Heart left ventricle (tissue), 16 donors: ENCODE measurements at regions of chr1 and their contacts with region 1.

Region 1: DNA sequence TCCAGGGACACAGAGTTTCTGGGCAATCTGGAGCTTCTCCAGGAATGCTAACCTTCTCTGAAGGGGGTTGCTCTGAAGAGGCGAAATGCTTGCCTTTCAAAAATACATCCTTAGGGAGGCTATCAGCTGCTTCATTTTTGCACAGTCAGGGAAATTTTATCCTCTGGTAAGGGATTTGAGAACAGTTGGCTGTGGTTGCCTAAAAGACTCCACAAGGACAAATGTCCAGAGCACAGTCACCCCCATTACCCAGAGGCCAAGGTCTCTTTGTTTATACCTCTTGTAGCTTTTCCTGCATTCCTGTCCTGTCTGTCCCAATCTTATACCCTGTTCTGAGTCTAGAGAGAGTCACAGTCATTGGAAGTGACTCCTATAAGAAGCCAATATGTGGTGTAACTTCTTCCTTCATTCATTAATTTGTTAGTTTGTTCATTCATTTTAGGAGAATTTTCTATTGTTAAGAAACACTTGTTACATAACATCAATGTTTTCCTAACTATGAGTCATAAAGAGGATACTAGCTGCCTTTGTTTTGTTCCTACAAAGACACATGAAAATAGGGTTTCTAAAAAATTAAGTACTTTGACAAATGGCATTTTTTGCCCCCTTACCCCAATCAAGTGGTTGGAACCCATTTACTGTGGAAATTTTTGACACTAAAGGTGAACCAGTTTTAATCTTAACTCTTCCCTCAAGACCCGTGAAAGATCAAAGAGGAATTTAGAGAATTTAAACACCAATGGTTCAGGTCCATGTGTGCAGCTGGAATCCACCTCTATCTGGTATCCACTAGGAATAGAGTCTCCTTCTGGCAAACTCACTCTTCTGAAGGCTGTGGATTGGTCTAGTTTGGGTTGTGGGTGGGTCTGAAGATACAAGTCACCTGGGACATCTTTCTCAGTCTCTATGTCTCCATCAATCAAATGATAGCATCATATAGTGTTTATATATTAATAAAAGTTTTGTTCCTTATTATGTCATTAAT is 47.1 kb downstream of the GPR88 start:
- DNase-seq: no peak
- ATAC-seq: no peak
- H3K4me3 ChIP-seq: no peak overlapping the region
- H3K27ac ChIP-seq: no peak overlapping the region
- H3K4me1 ChIP-seq: peaks cover 0 to 30% (median 10%) of the 10 kb centered on the region in 12 donors
- H3K27me3 ChIP-seq: no peaks in the 10 kb centered on the region
- CTCF ChIP-seq: no peak
- POLR2A ChIP-seq: no peak

Region 2: GRCh38 chr1:99869304-99869703 is 715.7 kb before region 1 on chr1:
- intact Hi-C with region 1: no loop called
- DNase-seq: no peak
- ATAC-seq: no peak
- H3K4me3 ChIP-seq: no peak overlapping the region
- H3K27ac ChIP-seq: no peak overlapping the region
- H3K4me1 ChIP-seq: no peaks in the 10 kb centered on the region
- H3K27me3 ChIP-seq: no peaks in the 10 kb centered on the region
- CTCF ChIP-seq: no peak
- POLR2A ChIP-seq: no peak

Region 3: DNA sequence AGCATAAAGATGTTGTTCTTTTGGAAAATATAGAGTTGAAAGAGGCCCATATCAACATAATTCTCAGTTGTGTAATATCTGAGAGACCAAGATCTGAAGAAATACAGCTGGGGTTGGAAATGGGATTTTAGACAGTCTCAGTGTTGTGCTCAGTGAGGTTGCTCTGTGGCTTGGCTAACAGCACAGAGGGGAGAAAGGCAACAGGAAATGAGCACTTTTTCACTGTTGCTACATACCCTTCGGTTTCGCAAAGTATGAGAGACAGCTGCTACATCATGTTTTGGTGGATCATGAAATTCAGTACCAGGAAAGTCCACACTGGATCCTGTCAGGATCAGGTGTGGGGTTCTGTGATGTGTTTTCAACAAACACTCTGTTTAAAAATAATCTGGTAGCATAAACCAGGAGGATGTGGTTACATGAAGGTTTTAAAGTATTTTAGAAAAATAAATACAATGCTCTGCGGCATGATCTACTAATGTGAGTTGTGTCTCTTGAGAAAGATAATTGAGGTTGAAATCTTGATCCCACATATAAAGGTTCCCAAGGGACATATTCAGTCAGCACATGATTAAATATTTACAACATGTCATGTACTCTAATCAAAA is 54.1 kb before region 1 on chr1:
- intact Hi-C with region 1: loop called in 1 of 10 experiments (anchors 5 kb)
- DNase-seq: peak in 3 of 5 donors; percentile 35 to 56 (median 36)
- ATAC-seq: peak; percentile 89 to 98 (median 96)
- H3K4me3 ChIP-seq: no peak overlapping the region
- H3K27ac ChIP-seq: peak overlapping the region in 10 of 12 donors; percentile 12 to 80 (median 60)
- H3K4me1 ChIP-seq: peaks cover 0 to 60% (median 6%) of the 10 kb centered on the region in 12 donors
- H3K27me3 ChIP-seq: peaks cover 0 to 7% (median 0%) of the 10 kb centered on the region in 9 donors
- CTCF ChIP-seq: no peak
- POLR2A ChIP-seq: no peak

Region 4: DNA sequence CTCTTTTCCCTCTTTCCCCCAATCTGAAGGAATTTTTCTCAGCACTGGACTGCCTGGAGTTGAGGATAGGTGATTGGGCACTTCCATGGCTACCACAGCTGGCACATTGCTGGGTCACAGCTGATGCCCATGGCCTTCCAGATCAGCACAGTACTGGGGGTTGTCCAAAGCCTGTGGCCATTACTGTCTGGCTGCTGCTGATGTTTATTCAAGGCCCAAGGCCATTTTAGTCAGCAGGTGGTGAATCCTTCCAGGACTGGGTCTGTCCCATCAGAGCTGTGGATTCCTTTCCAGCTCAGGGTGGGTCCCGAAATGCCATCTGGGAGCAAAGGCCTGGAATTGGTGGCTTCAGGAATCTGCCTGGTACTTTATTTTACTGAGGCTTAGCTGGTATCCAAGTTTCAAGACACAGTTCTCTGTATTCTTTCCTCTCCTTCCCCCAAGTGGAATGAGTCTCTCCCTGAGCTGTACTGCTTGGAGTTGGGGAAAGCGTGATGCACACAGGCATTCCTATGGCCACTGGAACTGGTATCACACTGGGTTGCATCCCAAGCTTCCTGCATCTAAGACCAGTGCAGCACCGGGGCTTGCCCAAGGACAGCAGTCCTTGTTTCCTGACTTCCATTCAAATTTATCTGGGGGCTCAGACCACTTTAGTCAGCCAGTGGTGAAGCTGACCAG is 28.0 kb before region 1 on chr1:
- intact Hi-C with region 1: no loop called
- DNase-seq: no peak
- ATAC-seq: no peak
- H3K4me3 ChIP-seq: no peak overlapping the region
- H3K27ac ChIP-seq: no peak overlapping the region
- H3K4me1 ChIP-seq: no peaks in the 10 kb centered on the region
- H3K27me3 ChIP-seq: no peaks in the 10 kb centered on the region
- CTCF ChIP-seq: no peak
- POLR2A ChIP-seq: no peak

Region 5: DNA sequence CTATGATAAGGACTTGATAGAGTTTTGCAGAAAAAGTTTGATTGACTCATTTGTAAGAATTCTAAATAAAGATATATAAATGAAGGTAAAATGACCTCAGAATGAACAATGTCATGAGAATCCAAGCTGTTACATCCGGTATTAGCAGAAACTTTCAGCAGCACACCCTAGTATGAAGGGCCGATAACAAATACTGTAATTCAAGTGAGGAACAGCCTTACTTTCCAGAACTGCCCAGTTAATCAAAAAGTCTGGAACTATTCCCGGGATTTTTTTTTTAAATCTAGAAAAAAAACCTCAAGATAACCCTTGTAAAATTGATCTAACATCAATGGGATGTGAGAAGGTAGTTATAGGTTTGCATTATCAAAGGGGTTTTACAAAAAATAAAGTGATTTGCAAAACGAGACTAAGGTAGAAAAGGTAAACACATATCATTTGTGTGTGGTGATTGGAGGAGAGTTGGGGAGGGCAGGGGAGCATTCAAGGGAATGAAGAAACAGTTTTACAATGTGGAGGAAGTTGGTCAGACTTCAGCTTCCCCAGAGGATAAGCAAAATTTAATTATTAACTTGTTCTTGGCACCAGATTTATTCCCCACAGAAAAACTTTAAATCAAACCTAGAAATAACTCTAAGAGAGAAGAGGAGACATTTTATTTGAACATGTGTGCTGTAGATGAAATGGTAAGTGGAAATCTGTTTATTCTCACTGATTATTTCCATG is 58.6 kb after region 1 on chr1:
- intact Hi-C with region 1: loop called in 1 of 10 experiments (anchors 10 kb)
- DNase-seq: no peak
- ATAC-seq: peak in 2 of 4 donors; percentile 70 to 84
- H3K4me3 ChIP-seq: peak overlapping the region in 1 of 12 donors; percentile 1
- H3K27ac ChIP-seq: peak overlapping the region in 6 of 12 donors; percentile 11 to 54 (median 37)
- H3K4me1 ChIP-seq: peaks cover 0 to 26% (median 9%) of the 10 kb centered on the region in 12 donors
- H3K27me3 ChIP-seq: no peaks in the 10 kb centered on the region
- CTCF ChIP-seq: no peak
- POLR2A ChIP-seq: no peak

Region 6: DNA sequence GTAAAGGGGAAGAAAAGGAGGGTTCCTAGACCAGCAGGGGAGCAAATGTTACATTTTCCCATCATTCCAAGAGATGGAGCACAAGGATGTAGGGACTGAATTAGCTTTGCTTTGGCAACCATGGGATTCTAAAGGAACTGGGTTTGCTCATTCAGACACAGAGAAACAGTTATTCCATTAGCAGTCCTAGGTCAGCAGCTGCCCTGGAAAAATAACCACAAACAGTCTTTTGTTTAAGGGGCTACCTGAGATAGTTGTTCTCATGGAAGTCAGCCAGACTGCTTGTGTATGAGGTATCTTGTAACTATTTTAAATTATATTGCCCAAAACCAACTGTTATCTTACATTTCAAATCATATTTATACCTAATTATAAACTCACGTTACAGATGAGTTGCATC is 76.1 kb after region 1 on chr1:
- intact Hi-C with region 1: no loop called
- DNase-seq: no peak
- ATAC-seq: no peak
- H3K4me3 ChIP-seq: no peak overlapping the region
- H3K27ac ChIP-seq: no peak overlapping the region
- H3K4me1 ChIP-seq: no peaks in the 10 kb centered on the region
- H3K27me3 ChIP-seq: no peaks in the 10 kb centered on the region
- CTCF ChIP-seq: no peak
- POLR2A ChIP-seq: no peak

Region 7: DNA sequence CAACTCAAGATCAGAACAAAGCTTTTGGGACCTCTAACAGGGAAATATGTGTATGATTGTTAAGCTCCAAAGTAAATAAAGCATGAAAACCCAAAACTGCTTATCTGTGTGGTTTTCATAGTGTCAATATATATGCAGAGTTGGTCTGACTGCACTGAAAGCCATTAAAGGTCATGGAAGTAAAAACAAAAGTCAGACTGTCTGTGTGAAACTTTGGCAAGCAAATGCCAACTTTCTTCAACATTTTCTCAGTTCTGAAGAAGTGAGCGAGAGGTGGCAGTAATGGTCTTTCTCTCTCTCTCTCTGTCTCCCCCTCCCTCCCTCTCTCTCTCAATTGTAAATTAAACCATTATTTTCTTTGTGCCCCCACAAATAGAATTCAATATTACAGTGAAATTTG is 551.7 kb after region 1 on chr1:
- intact Hi-C with region 1: no loop called
- DNase-seq: no peak
- ATAC-seq: peak; percentile 34 to 68 (median 59)
- H3K4me3 ChIP-seq: no peak overlapping the region
- H3K27ac ChIP-seq: peak overlapping the region in 3 of 12 donors; percentile 23 to 33 (median 25)
- H3K4me1 ChIP-seq: peaks cover 0 to 38% (median 21%) of the 10 kb centered on the region in 12 donors
- H3K27me3 ChIP-seq: no peaks in the 10 kb centered on the region
- CTCF ChIP-seq: peak in 9 of 12 donors; percentile 22 to 57 (median 43)
- POLR2A ChIP-seq: no peak